ENCODE measurements at regions of chr12 and their contacts with region 1.

Region 1: GRCh38 chr12:107131832-107132616 is 38.7 kb upstream of the CRY1 start:
- DNase-seq: peak; percentile 17
- ATAC-seq: peak; percentile 48
- H3K4me3 Mint-ChIP-seq: no peak overlapping the region
- H3K27ac Mint-ChIP-seq: no peak overlapping the region
- H3K4me1 Mint-ChIP-seq: peaks cover 4% of the 10 kb centered on the region
- H3K27me3 Mint-ChIP-seq: no peaks in the 10 kb centered on the region
- CTCF ChIP-seq: peak; percentile 85

Region 2: DNA sequence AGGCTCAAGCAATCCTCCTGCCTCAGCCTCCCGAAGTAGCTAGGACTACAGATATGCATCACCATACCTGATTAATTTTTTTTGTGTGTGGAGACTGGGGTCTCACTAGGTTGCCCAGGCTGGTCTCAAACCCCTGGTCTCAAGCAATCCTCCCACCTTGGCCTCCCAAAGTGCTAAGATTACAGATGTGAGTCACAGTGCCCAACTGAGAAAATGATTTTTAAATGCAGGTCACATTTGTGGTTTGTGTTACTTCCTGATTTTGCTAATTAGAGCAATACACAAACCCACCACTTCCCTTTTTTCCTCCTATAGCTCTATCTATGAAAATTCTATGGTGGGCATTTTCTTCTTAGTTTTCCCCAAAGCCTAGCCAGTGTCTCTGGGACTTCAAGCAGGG is 221.8 kb before region 1 on chr12:
- CTCF ChIA-PET with region 1: no interaction called
- POLR2A ChIA-PET with region 1: no interaction called
- intact Hi-C with region 1: no loop called
- DNase-seq: peak; percentile 17
- ATAC-seq: no peak
- H3K4me3 Mint-ChIP-seq: no peak overlapping the region
- H3K27ac Mint-ChIP-seq: no peak overlapping the region
- H3K4me1 Mint-ChIP-seq: peaks cover 26% of the 10 kb centered on the region
- H3K27me3 Mint-ChIP-seq: peaks cover 11% of the 10 kb centered on the region
- CTCF ChIP-seq: no peak

Region 3: GRCh38 chr12:107057071-107057818 is 74.8 kb before region 1 on chr12:
- CTCF ChIA-PET with region 1: no interaction called
- POLR2A ChIA-PET with region 1: no interaction called
- intact Hi-C with region 1: no loop called
- DNase-seq: no peak
- ATAC-seq: no peak
- H3K4me3 Mint-ChIP-seq: no peak overlapping the region
- H3K27ac Mint-ChIP-seq: no peak overlapping the region
- H3K4me1 Mint-ChIP-seq: peaks cover 5% of the 10 kb centered on the region
- H3K27me3 Mint-ChIP-seq: no peaks in the 10 kb centered on the region
- CTCF ChIP-seq: peak; percentile 24

Region 4: GRCh38 chr12:107109741-107110719 is 22.0 kb before region 1 on chr12:
- CTCF ChIA-PET with region 1: interaction called, 78 read pairs
- POLR2A ChIA-PET with region 1: no interaction called
- intact Hi-C with region 1: no loop called
- DNase-seq: no peak
- ATAC-seq: no peak
- H3K4me3 Mint-ChIP-seq: no peak overlapping the region
- H3K27ac Mint-ChIP-seq: no peak overlapping the region
- H3K4me1 Mint-ChIP-seq: no peaks in the 10 kb centered on the region
- H3K27me3 Mint-ChIP-seq: peaks cover 5% of the 10 kb centered on the region
- CTCF ChIP-seq: no peak

Region 5: GRCh38 chr12:107152315-107152714 is 20.3 kb after region 1 on chr12:
- CTCF ChIA-PET with region 1: interaction called, 18 read pairs
- POLR2A ChIA-PET with region 1: no interaction called
- intact Hi-C with region 1: no loop called
- DNase-seq: no peak
- ATAC-seq: no peak
- H3K4me3 Mint-ChIP-seq: no peak overlapping the region
- H3K27ac Mint-ChIP-seq: no peak overlapping the region
- H3K4me1 Mint-ChIP-seq: no peaks in the 10 kb centered on the region
- H3K27me3 Mint-ChIP-seq: peaks cover 9% of the 10 kb centered on the region
- CTCF ChIP-seq: no peak

Region 6: GRCh38 chr12:107309020-107309419 is 177.0 kb after region 1 on chr12:
- CTCF ChIA-PET with region 1: interaction called, 13 read pairs
- POLR2A ChIA-PET with region 1: no interaction called
- intact Hi-C with region 1: no loop called
- DNase-seq: no peak
- ATAC-seq: peak; percentile 64
- H3K4me3 Mint-ChIP-seq: no peak overlapping the region
- H3K27ac Mint-ChIP-seq: no peak overlapping the region
- H3K4me1 Mint-ChIP-seq: peaks cover 14% of the 10 kb centered on the region
- H3K27me3 Mint-ChIP-seq: no peaks in the 10 kb centered on the region
- CTCF ChIP-seq: no peak

Region 7: GRCh38 chr12:107372229-107372658 is 240.2 kb after region 1 on chr12:
- CTCF ChIA-PET with region 1: interaction called, 10 read pairs
- POLR2A ChIA-PET with region 1: no interaction called
- intact Hi-C with region 1: no loop called
- DNase-seq: peak; percentile 64
- ATAC-seq: peak; percentile 64
- H3K4me3 Mint-ChIP-seq: peak overlapping the region; percentile 24
- H3K27ac Mint-ChIP-seq: peak overlapping the region; percentile 98
- H3K4me1 Mint-ChIP-seq: peaks cover 73% of the 10 kb centered on the region
- H3K27me3 Mint-ChIP-seq: no peaks in the 10 kb centered on the region
- CTCF ChIP-seq: no peak

Region 8: GRCh38 chr12:107448198-107448597 is 316.2 kb after region 1 on chr12:
- CTCF ChIA-PET with region 1: interaction called, 10 read pairs
- POLR2A ChIA-PET with region 1: no interaction called
- intact Hi-C with region 1: no loop called
- DNase-seq: peak; percentile 9
- ATAC-seq: no peak
- H3K4me3 Mint-ChIP-seq: no peak overlapping the region
- H3K27ac Mint-ChIP-seq: no peak overlapping the region
- H3K4me1 Mint-ChIP-seq: peaks cover 17% of the 10 kb centered on the region
- H3K27me3 Mint-ChIP-seq: no peaks in the 10 kb centered on the region
- CTCF ChIP-seq: no peak

Region 9: GRCh38 chr12:107607464-107608392 is 475.7 kb after region 1 on chr12:
- CTCF ChIA-PET with region 1: interaction called, 235 read pairs
- POLR2A ChIA-PET with region 1: no interaction called
- intact Hi-C with region 1: loop called (anchors 2 kb)
- DNase-seq: peak; percentile 86
- ATAC-seq: peak; percentile 81
- H3K4me3 Mint-ChIP-seq: no peak overlapping the region
- H3K27ac Mint-ChIP-seq: no peak overlapping the region
- H3K4me1 Mint-ChIP-seq: no peaks in the 10 kb centered on the region
- H3K27me3 Mint-ChIP-seq: no peaks in the 10 kb centered on the region
- CTCF ChIP-seq: peak; percentile 87

Measured in activated CD8-positive, alpha-beta T cell treated with anti-CD3 and anti-CD28 coated beads for 36 hours (primary cell).